AG04449 (cell line): ENCODE measurements at regions of chr2 and their contacts with region 1.

Region 1: GRCh38 chr2:9310377-9310776 is 103.8 kb downstream of the ASAP2 start:
- DNase-seq: peak; percentile 77
- H3K4me3 ChIP-seq: no peak overlapping the region
- CTCF ChIP-seq: no peak

Region 2: DNA sequence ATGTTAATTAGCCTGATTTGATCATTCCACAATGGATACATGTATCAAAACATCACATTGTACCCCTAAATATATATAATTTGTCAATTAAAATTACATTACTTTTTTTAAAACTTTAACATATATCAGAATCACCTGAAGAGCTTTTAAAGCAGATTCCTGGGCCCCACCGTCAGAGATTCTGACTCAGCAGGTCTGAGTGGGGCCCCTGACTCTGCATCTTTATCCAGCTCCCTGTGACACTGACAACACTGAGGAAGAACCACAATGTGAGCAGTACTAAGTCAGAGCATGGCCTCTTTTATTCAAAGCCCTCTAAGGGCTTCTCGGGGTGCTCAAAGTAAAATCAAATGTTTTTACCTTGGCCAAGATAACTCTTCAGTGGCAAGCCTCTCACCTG is 482.6 kb before region 1 on chr2:
- CTCF ChIA-PET with region 1: no interaction called
- POLR2A ChIA-PET with region 1: no interaction called
- DNase-seq: no peak
- H3K4me3 ChIP-seq: no peak overlapping the region
- CTCF ChIP-seq: no peak

Region 3: GRCh38 chr2:9074930-9075329 is 235.4 kb before region 1 on chr2:
- CTCF ChIA-PET with region 1: no interaction called
- POLR2A ChIA-PET with region 1: no interaction called
- DNase-seq: no peak
- H3K4me3 ChIP-seq: no peak overlapping the region
- CTCF ChIP-seq: no peak

Region 4: DNA sequence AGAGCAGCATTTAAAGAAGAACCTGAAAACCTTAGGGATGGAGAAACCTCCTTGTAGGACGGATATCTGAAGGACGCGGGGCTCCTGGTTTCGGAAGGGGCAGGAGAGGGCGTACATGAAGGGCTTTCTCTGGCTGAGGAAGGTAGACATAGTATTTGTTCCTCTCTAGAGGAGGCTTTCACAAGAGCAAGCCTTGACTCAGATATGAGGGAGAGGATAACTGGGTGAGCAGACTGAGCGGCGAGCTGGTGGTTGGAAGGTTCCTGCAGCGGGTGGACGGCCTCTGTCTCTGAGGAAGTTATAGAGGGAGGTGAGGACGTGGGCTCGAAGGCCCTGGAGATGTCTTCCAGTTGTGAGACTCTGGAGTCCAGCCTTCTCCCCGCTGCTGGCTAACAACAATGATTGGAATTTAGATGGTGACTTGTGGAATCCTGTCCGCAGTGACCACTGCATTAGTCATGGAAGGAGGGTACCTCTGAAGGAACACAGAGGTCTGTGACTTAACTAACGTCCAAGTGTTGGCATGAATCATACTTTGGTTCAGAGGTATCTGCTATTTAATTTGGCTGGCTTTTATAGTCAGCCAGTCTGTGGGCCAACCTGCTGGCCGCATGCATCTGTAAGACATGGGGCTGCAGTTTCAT is 22.9 kb before region 1 on chr2:
- CTCF ChIA-PET with region 1: interaction called, 3 read pairs
- POLR2A ChIA-PET with region 1: interaction called, 20 read pairs
- DNase-seq: peak; percentile 96
- H3K4me3 ChIP-seq: peak overlapping the region; percentile 8; the same call in 1 of the 2 replicates
- CTCF ChIP-seq: no peak

Region 5: GRCh38 chr2:9474361-9474967 is 164.1 kb after region 1 on chr2 and contains the start of gene IAH1:
- CTCF ChIA-PET with region 1: no interaction called
- POLR2A ChIA-PET with region 1: no interaction called
- DNase-seq: no peak
- H3K4me3 ChIP-seq: peak within 1 kb of the TSS; percentile 73
- CTCF ChIP-seq: no peak